OCI-LY7 (cell line): ENCODE measurements at regions of chr11 and their contacts with region 1.

Region 1: DNA sequence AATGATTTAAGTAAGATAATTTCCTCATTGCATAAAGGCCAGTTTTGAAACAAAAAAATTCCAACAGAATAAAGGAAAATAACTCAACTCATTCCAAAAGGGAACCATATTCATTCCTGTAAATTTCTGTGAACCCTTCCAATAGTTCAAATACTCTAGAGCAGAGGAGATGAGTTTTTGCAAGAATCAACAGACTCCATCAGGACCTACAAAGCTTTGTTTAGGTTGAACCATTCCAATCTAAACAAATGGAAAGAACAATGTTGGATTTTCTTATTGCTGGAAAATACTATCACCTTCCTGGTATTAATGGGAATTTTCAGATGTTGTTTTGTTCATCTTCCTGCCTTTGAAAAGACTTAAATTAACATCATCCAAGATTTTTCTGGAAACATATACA is 21.8 kb upstream of the OR5AN1 start:
- DNase-seq: no peak
- H3K4me3 ChIP-seq: no peak overlapping the region
- H3K27ac ChIP-seq: no peak overlapping the region
- H3K4me1 ChIP-seq: no peaks in the 10 kb centered on the region
- CTCF ChIP-seq: no peak

Region 2: GRCh38 chr11:58796333-58796732 is 540.6 kb before region 1 on chr11:
- CTCF ChIA-PET with region 1: no interaction called
- POLR2A ChIA-PET with region 1: no interaction called
- intact Hi-C with region 1: no loop called
- DNase-seq: no peak
- H3K4me3 ChIP-seq: no peak overlapping the region
- H3K27ac ChIP-seq: no peak overlapping the region
- H3K4me1 ChIP-seq: no peaks in the 10 kb centered on the region
- CTCF ChIP-seq: no peak

Region 3: DNA sequence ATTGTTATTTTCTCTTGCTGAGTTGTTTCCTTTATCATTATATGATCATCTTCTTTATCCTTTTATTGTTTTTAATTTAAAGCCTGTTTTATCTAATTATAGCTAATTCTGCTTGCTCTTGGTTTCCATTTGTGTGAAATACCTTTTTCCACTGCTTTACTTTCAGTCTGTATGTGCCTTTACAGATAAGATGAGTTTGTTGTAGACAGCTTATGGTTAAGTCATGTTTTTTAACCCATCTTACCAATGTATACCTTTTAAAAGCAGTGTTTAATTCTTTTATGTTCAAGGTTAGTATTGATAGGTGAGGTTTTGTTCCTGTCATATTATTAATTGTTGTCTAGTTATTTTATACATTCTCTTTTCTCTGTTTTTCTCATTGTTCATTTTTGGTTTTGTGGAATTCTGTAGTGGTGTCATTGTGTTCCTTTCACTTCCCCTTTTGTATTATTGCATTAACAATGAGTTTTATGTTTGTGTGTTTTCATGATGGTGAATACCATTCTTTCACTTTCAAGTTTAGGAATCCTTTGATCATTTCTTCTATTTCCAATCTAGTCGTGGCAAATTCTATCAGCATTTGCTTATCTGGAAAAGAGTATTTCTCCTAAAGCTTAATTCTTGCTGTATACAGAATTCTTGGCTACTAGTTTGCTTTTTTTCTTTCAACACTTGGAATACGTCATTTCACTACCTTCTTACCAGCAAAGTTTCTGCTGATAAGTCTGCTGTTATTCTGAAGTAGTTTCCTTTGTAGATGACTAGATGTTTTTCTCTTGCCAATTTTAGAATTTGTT is 43.5 kb after region 1 on chr11:
- CTCF ChIA-PET with region 1: no interaction called
- POLR2A ChIA-PET with region 1: no interaction called
- intact Hi-C with region 1: loop called (anchors 1 kb)
- DNase-seq: no peak
- H3K4me3 ChIP-seq: no peak overlapping the region
- H3K27ac ChIP-seq: no peak overlapping the region
- H3K4me1 ChIP-seq: no peaks in the 10 kb centered on the region
- CTCF ChIP-seq: no peak